ENCODE measurements at regions of chr22 and their contacts with region 1.

Region 1: GRCh38 chr22:16917144-16918003 is 90.6 kb downstream of the GAB4 start:
- DNase-seq: peak; percentile 44 to 69 (median 57)
- ATAC-seq: peak; percentile 79 to 89 (median 84)
- H3K4me3 ChIP-seq: no peak overlapping the region
- H3K27ac ChIP-seq: no peak overlapping the region
- H3K4me1 ChIP-seq: no peaks in the 10 kb centered on the region
- H3K27me3 ChIP-seq: no peaks in the 10 kb centered on the region
- CTCF ChIP-seq: peak; percentile 42 to 65 (median 61)
- POLR2A ChIP-seq: no peak

Region 2: GRCh38 chr22:17057959-17058814 is 140.8 kb after region 1 on chr22:
- intact Hi-C with region 1: loop called in 1 of 2 experiments (anchors 5 kb)
- DNase-seq: peak in 2 of 3 donors; percentile 51 to 63
- ATAC-seq: peak; percentile 94 to 98 (median 96)
- H3K4me3 ChIP-seq: no peak overlapping the region
- H3K27ac ChIP-seq: no peak overlapping the region
- H3K4me1 ChIP-seq: no peaks in the 10 kb centered on the region
- H3K27me3 ChIP-seq: no peaks in the 10 kb centered on the region
- CTCF ChIP-seq: peak; percentile 84 to 92 (median 90)
- POLR2A ChIP-seq: no peak

Measured in right lobe of liver (tissue), 6 donors.